Activated CD4-positive, alpha-beta T cell treated with anti-CD3 and anti-CD28 coated beads for 36 hours (primary cell): ENCODE measurements at regions of chr19 and their contacts with region 1.

Region 1: DNA sequence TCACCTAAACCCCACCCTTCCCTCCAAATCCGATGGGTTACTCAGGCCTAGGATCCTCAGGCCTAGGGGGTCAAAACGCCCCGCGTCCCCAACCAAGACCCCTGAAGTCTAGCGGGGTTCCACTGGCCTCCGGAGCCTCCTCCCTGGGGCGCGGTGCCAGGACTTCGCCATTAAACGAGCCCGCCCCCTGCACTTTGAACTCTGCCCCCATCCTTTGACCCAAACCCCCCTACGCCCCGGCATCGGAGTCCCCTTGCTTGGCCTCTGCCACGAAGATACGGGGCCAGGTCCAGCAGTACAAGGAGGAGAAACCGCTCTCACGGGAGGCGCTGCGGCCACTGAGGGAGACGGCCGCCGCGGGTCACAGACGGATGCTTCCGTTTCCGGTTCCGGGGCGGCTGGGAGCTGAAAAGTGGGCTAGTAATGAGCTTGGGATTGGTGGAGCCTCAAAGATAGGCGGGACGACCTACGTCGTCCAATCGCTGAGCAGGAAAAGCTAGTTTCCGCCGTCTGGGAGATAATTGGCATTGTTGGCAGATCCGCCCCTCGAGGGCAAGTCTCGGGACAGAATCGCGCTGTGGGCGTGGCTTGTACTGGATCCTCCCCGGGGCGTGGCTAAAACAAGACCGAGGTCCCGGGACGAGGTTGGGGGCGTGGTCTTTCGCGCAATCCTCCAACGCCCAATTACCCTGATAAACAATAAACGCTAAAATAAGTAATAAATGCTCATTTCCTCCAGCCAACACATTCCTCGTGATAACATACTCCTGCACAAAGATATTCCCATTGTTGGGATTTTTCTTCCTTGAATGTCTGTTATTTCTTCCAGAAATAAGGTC is 5.7 kb upstream of the ZNF77 start:
- DNase-seq: peak; percentile 100
- ATAC-seq: peak; percentile 99
- H3K4me3 Mint-ChIP-seq: peak overlapping the region; percentile 95
- H3K27ac Mint-ChIP-seq: peak overlapping the region; percentile 95
- H3K4me1 Mint-ChIP-seq: peaks cover 14% of the 10 kb centered on the region
- H3K27me3 Mint-ChIP-seq: no peaks in the 10 kb centered on the region

Region 2: DNA sequence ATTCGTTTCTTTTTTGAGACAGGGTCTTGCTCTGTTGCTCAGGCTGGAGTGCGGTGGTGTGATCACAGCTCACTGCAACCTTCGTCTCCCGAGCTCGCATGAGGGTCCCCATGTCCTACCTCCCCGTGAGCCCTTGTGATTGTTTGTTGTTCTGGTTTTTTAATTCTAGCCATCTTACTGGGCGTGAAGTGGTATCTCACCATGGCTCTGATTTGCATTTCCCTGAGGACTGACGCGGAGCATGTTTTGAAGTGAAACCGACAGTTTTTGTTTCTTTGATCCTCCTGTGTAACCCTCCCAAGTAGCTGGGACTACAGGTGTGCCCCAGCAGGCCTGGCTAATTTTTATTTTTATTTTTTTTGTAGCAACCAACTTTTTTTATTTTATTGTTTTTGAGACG is 269.7 kb before region 1 on chr19:
- CTCF ChIA-PET with region 1: no interaction called
- POLR2A ChIA-PET with region 1: no interaction called
- intact Hi-C with region 1: no loop called
- DNase-seq: no peak
- ATAC-seq: no peak
- H3K4me3 Mint-ChIP-seq: no peak overlapping the region
- H3K27ac Mint-ChIP-seq: no peak overlapping the region
- H3K4me1 Mint-ChIP-seq: no peaks in the 10 kb centered on the region
- H3K27me3 Mint-ChIP-seq: no peaks in the 10 kb centered on the region

Region 3: GRCh38 chr19:2694196-2694595 is 256.3 kb before region 1 on chr19:
- CTCF ChIA-PET with region 1: no interaction called
- POLR2A ChIA-PET with region 1: no interaction called
- intact Hi-C with region 1: no loop called
- DNase-seq: no peak
- ATAC-seq: no peak
- H3K4me3 Mint-ChIP-seq: no peak overlapping the region
- H3K27ac Mint-ChIP-seq: no peak overlapping the region
- H3K4me1 Mint-ChIP-seq: peaks cover 8% of the 10 kb centered on the region
- H3K27me3 Mint-ChIP-seq: no peaks in the 10 kb centered on the region

Region 4: GRCh38 chr19:2782936-2783780 is 167.3 kb before region 1 on chr19 and contains the start of gene SGTA:
- CTCF ChIA-PET with region 1: no interaction called
- POLR2A ChIA-PET with region 1: no interaction called
- intact Hi-C with region 1: loop called in 1 of 2 experiments (anchors 1 kb)
- DNase-seq: peak; percentile 98
- ATAC-seq: peak; percentile 84
- H3K4me3 Mint-ChIP-seq: peak within 1 kb of the TSS; percentile 91
- H3K27ac Mint-ChIP-seq: peak within 1 kb of the TSS; percentile 98
- H3K4me1 Mint-ChIP-seq: peaks cover 58% of the 10 kb centered on the region
- H3K27me3 Mint-ChIP-seq: no peaks in the 10 kb centered on the region
- total RNA-seq, gene SGTA: 53.0 to 62.2 TPM

Region 5: DNA sequence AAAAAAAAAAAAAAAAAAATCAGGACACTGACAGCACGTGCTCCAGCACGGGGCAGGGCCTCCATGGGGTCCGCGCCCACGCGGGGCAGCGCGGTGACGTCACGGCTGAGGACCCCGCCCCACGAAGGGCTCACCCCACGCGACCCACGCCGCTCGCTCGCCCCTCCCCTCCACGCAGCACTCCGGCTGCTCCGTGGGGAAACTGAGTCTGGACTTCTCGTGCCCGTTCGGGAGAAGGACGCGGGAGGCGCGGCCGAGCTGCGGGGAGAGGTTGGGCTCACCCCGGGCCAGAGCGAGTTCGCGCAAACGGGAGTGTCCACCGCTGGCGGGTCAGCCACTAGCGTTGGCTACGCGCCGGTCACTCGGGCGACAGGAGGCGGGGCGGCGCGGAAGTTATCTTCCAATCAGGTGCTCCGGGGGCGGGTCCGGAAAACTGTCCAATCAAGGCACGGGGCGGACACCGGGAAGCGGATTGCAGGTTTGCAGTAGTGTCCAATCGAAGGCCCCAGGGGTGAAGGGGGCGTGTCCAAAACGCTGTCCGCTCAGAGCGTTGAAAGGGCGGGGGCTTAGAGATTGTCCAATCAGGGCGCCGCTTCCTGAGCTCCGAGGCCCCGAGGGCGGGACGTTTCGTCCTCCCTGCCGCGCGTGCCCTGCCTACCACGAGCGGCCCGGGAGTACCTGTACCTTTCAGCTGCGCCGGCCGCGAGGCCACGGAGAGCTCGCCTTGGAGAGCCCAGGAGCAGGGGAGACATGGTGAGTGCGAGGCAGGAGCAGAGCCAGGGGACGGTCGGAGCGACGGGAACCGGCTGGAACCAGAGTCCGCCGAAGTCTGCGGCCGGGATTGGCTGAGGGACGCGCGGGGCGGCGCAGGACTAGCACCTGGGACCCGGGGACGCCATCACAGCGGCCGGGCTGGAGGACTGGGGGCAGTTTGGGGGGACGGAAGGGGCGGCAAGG is 49.9 kb before region 1 on chr19 and contains the start of gene ZNF57:
- CTCF ChIA-PET with region 1: interaction called, 6 read pairs
- POLR2A ChIA-PET with region 1: interaction called, 11 read pairs
- intact Hi-C with region 1: loop called in 1 of 2 experiments (anchors 1 kb)
- DNase-seq: peak; percentile 100
- ATAC-seq: peak; percentile 99
- H3K4me3 Mint-ChIP-seq: peak within 1 kb of the TSS; percentile 98
- H3K27ac Mint-ChIP-seq: peak within 1 kb of the TSS; percentile 96
- H3K4me1 Mint-ChIP-seq: peaks cover 18% of the 10 kb centered on the region
- H3K27me3 Mint-ChIP-seq: no peaks in the 10 kb centered on the region
- total RNA-seq, gene ZNF57: 5.9 to 7.1 TPM

Region 6: GRCh38 chr19:2977001-2977685 is 26.6 kb after region 1 on chr19 and contains the start of gene TLE6:
- CTCF ChIA-PET with region 1: interaction called, 15 read pairs
- POLR2A ChIA-PET with region 1: no interaction called
- intact Hi-C with region 1: loop called in 1 of 2 experiments (anchors 1 kb)
- DNase-seq: peak; percentile 98
- ATAC-seq: peak; percentile 100
- H3K4me3 Mint-ChIP-seq: peak within 1 kb of the TSS; percentile 77
- H3K27ac Mint-ChIP-seq: peak within 1 kb of the TSS; percentile 63
- H3K4me1 Mint-ChIP-seq: peaks cover 14% of the 10 kb centered on the region
- H3K27me3 Mint-ChIP-seq: peaks cover 4% of the 10 kb centered on the region
- total RNA-seq, gene TLE6: 2.6 to 3.5 TPM

Region 7: GRCh38 chr19:3100865-3101730 is 150.6 kb after region 1 on chr19:
- CTCF ChIA-PET with region 1: interaction called, 24 read pairs
- POLR2A ChIA-PET with region 1: no interaction called
- intact Hi-C with region 1: no loop called
- DNase-seq: no peak
- ATAC-seq: no peak
- H3K4me3 Mint-ChIP-seq: no peak overlapping the region
- H3K27ac Mint-ChIP-seq: no peak overlapping the region
- H3K4me1 Mint-ChIP-seq: peaks cover 23% of the 10 kb centered on the region
- H3K27me3 Mint-ChIP-seq: no peaks in the 10 kb centered on the region

Region 8: DNA sequence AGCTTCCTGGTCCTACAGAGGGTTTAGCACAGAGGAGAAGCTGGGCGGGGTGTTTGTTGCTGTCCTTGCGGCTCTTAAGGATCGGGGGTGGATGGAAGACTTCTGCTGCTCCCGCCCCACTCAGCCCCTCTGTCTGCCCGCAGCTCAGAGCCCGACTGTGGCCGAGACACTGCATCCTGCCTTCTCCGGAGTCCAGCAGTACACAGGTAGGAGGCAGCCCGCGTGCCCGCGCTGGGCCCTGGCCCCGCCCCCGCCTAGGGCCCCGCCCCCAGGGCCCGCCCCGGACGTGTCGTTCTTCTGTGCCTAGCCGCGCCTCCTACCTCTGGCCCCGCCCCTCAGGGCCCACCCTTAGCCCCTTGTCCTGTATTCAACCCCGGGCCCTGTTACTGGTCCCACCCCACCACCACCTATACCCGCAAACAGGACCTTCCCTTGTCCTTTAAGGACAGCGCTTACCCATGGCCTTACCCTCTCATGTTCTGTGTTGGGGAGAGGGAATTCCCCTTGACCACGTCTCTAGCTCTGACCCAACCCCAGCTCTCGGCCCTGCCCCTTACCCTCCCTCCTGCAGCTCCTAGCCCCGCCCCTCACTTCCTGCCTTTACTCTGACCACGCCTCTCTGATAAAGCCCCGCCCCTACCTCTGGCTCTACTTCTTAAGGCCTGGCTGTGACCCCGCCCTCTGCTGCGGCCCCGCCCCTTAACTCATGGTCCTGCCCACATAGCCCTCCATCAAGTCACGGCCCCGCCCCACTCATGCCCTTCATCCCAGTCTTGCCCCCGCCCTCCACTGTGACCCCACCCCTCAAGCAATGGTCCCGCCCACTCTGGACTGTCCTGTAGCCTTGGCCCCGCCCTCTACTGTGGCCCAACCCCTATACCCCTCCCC is 334.5 kb after region 1 on chr19:
- CTCF ChIA-PET with region 1: interaction called, 3 read pairs
- POLR2A ChIA-PET with region 1: no interaction called
- intact Hi-C with region 1: loop called in 1 of 2 experiments (anchors 1 kb)
- DNase-seq: peak; percentile 94
- ATAC-seq: peak; percentile 91
- H3K4me3 Mint-ChIP-seq: peak overlapping the region; percentile 51
- H3K27ac Mint-ChIP-seq: no peak overlapping the region
- H3K4me1 Mint-ChIP-seq: peaks cover 12% of the 10 kb centered on the region
- H3K27me3 Mint-ChIP-seq: peaks cover 19% of the 10 kb centered on the region

Region 9: DNA sequence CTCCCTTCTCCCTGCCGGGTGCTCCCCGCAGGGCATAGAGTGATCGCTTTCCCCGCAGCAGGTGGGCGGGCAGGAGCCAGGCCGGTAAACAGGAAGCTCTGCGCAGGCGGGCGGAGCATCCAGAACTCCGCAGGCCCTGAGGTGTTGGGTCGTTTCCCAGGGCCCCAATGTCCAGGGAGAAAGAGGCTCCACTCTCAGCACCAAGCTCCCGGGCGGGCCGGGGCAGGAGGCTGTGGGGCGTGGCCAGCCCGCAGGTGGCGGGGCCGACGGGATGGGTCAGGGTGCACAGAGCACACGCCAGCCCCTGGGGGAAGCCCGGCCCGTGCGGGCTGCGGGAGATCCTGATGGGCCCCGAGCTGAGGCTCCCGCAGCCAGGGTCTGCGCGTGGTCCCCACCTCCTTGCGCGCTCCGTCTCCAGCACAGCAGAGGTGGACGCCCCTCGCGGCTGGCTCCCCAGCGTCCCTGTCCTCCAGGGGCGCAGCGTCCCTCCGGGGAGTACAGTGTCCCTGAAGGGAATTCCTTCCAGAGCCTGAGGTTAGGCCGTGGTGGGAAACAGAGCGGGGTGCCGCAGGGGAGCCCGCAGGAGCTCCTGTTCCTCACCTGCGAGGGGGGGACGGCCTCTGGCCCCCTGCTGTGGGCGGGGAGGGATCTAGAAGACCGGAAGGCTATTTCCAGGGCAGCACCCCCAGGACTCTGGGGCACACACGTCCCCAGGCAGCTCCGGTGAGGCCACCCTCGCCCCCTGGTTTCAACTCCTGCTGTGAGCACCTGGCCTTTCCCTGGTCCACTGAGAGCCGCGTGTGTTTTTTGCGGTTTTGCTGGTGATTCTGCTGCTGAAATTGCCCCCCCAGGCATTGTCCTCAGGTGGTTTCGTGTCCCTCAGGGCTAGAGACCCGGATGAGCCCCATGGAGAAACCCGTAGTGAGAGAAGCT is 737.5 kb after region 1 on chr19:
- CTCF ChIA-PET with region 1: no interaction called
- POLR2A ChIA-PET with region 1: no interaction called
- intact Hi-C with region 1: no loop called
- DNase-seq: peak; percentile 75
- ATAC-seq: peak; percentile 49
- H3K4me3 Mint-ChIP-seq: peak overlapping the region; percentile 59
- H3K27ac Mint-ChIP-seq: peak overlapping the region; percentile 78
- H3K4me1 Mint-ChIP-seq: peaks cover 53% of the 10 kb centered on the region
- H3K27me3 Mint-ChIP-seq: no peaks in the 10 kb centered on the region